ENCODE measurements at regions of chr11 and their contacts with region 1.

Region 1: DNA sequence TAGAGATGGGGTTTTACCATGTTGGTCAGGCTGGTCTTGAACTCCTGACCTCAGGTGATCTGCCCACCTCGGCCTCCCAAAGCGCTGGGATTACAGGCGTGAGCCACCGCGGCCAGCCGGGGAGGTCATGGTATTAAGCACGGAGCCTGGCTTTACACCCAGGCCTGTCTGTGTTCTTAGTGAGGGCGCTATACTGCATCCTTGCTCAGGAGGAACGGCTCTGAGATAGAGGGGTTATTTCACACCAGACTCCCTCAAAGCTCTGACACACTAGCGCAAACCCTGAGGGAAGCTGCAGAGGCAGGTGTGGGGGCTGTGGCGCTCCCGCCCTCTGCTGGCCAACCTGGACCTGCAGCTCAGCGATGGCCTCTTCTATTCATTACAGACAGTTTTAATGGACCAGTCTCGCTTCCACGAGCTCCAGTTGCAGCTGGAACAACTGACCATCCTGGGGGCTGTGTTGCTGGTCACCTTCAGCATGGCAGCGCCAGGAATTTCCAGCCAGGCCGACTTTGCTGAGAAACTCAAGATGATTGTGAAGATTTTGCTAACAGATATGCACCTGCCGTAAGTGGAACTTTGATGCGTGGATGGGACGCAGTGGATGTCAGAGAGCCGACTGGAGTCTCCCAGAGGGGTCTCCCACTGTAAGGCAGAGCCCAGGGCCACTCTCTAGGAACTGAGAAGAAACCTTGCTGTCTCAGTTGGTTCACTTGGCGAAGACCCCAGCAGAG is 26.2 kb downstream of the TCP11L1 start:
- DNase-seq: peak; percentile 88
- ATAC-seq: peak; percentile 96
- H3K4me3 Mint-ChIP-seq: no peak overlapping the region
- H3K27ac Mint-ChIP-seq: no peak overlapping the region; the same call in 1 of the 2 replicates
- H3K4me1 Mint-ChIP-seq: peaks cover 19% of the 10 kb centered on the region
- H3K27me3 Mint-ChIP-seq: no peaks in the 10 kb centered on the region
- CTCF ChIP-seq: peak; percentile 78

Region 2: DNA sequence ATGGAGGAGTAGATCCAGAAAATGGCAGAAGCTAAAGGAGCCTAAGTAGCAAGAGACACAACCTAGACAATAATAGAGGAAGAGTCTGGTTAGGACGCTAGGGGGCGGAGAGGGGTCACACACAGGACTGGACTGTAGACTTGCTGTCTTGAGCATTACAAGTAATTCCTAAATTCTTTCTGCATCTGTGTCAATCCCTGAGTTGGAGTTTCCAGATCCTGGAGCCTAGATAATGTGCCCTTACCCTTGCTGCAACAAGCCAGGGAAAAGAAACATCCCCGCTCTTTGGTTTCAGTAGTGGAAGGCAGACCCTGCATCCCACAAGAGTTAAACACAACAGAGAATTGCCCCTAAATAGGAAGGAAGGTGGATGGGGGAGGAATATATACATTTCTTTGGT is 256.3 kb before region 1 on chr11:
- CTCF ChIA-PET with region 1: interaction called, 27 read pairs
- POLR2A ChIA-PET with region 1: no interaction called
- DNase-seq: peak; percentile 80
- ATAC-seq: peak; percentile 100
- H3K4me3 Mint-ChIP-seq: no peak overlapping the region
- H3K27ac Mint-ChIP-seq: no peak overlapping the region
- H3K4me1 Mint-ChIP-seq: peaks cover 4% of the 10 kb centered on the region; the same call in 1 of the 2 replicates
- H3K27me3 Mint-ChIP-seq: no peaks in the 10 kb centered on the region
- CTCF ChIP-seq: peak; percentile 64

Region 3: DNA sequence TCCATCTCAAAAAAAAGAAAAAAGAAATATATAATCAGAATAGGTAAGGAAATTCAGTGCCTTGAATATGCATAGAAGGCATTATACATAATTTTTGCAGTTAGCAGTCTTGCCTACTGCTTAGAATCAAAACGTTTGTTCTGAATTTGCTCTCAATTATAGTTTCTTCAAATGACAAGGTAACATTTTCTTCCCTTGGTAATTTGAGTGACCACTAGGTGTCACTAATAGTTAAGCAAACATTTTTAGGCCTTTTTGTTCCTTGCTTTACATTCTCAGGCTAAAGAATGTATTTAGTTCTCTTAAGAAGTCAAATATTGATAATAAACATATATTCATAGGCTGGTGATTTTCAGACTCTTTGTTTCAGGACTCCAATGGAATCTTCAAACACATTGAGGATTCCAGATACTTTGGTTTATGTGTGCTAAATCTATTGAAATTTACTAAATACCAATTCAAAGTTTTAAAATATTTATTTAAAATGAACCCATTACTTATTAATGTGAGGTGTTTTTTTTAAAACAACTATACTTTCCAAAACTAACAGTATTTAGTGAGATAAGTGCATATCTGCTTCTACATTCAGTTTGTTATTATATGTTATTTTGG is 105.0 kb before region 1 on chr11:
- CTCF ChIA-PET with region 1: interaction called, 11 read pairs
- POLR2A ChIA-PET with region 1: no interaction called
- DNase-seq: no peak
- ATAC-seq: no peak
- H3K4me3 Mint-ChIP-seq: no peak overlapping the region
- H3K27ac Mint-ChIP-seq: no peak overlapping the region
- H3K4me1 Mint-ChIP-seq: no peaks in the 10 kb centered on the region
- H3K27me3 Mint-ChIP-seq: no peaks in the 10 kb centered on the region
- CTCF ChIP-seq: peak; percentile 48; the same call in 1 of the 2 replicates

Region 4: GRCh38 chr11:33005175-33005574 is 60.4 kb before region 1 on chr11:
- CTCF ChIA-PET with region 1: no interaction called
- POLR2A ChIA-PET with region 1: no interaction called
- DNase-seq: no peak
- ATAC-seq: no peak
- H3K4me3 Mint-ChIP-seq: no peak overlapping the region
- H3K27ac Mint-ChIP-seq: peak overlapping the region; percentile 7; the same call in 1 of the 2 replicates
- H3K4me1 Mint-ChIP-seq: peaks cover 13% of the 10 kb centered on the region
- H3K27me3 Mint-ChIP-seq: no peaks in the 10 kb centered on the region; the same call in 1 of the 2 replicates
- CTCF ChIP-seq: no peak

Region 5: DNA sequence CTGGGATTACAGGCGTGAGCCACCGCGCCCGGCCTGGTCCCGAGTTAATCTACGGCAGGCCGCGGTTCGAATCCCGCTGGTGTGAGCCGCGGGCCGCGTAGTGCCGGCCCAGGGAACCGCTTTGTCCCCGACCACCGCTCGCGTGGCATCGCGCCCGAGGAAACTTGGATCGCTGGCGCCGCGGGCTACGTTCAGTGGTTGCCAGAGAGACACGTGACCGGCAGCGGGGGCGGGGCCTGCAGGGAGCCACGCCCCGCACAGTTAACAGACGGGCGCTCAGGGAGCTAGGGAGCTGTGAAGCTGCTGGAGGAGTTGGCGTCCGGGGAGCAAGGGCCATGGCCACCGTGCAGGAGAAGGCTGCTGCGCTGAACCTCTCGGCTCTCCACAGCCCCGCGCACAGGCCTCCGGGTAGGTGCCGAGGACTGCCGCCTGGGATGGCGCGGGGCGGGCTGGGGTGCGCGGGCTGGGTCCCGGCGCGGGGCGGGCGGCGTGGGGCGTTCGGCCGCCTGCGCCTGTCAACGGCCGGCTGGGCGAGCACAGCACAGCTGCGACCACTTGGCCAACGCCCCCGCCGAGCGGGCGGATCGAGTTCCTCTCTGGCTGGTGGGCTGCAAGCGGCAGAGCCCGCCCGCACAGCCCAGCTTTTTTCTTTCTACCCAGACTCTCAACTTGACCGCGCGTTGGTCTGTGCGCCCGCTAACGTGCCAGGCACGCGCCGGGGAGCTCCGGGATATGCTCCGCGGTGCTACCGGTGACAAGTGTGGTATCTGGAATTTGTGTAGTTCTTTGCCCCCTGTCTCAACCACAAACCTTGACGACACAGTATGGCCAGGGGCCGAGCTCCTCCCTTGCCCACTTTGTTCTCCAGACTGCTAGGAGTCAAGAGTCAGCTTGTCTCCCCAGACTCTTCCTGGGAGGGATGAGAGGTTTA is 49.7 kb before region 1 on chr11 and contains the start of gene DEPDC7:
- CTCF ChIA-PET with region 1: interaction called, 16 read pairs
- POLR2A ChIA-PET with region 1: no interaction called
- DNase-seq: peak; percentile 94
- ATAC-seq: peak; percentile 93
- H3K4me3 Mint-ChIP-seq: peak within 1 kb of the TSS; percentile 72
- H3K27ac Mint-ChIP-seq: no peak within 1 kb of the TSS
- H3K4me1 Mint-ChIP-seq: peaks cover 18% of the 10 kb centered on the region
- H3K27me3 Mint-ChIP-seq: peaks cover 38% of the 10 kb centered on the region
- CTCF ChIP-seq: no peak
- total RNA-seq, gene DEPDC7: 4.7 to 5.6 TPM (median 5.1 TPM) in 3 replicates

Region 6: DNA sequence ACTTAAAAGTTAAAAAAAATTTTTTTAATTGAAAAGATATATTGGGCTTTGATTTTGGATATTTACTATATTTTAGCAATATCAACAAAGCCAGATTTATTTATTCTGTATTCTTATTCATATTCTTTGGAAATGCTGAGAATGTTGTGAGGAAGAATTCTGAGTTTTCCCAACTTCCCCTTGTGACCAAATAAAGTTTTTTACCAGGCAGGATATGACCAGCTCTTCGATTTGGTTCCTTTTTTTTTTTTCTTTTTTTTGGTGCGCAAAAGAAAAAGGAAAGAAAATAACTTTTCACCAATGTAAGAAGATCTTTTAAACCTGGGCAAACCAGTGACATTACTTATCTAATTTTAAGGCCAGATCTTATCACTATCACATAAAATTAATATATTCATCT is 13.4 kb before region 1 on chr11:
- CTCF ChIA-PET with region 1: interaction called, 11 read pairs
- POLR2A ChIA-PET with region 1: no interaction called
- DNase-seq: no peak
- ATAC-seq: no peak
- H3K4me3 Mint-ChIP-seq: no peak overlapping the region
- H3K27ac Mint-ChIP-seq: no peak overlapping the region
- H3K4me1 Mint-ChIP-seq: peaks cover 12% of the 10 kb centered on the region
- H3K27me3 Mint-ChIP-seq: no peaks in the 10 kb centered on the region
- CTCF ChIP-seq: no peak